ENCODE measurements at regions of chr6 and their contacts with region 1.

Region 1: DNA sequence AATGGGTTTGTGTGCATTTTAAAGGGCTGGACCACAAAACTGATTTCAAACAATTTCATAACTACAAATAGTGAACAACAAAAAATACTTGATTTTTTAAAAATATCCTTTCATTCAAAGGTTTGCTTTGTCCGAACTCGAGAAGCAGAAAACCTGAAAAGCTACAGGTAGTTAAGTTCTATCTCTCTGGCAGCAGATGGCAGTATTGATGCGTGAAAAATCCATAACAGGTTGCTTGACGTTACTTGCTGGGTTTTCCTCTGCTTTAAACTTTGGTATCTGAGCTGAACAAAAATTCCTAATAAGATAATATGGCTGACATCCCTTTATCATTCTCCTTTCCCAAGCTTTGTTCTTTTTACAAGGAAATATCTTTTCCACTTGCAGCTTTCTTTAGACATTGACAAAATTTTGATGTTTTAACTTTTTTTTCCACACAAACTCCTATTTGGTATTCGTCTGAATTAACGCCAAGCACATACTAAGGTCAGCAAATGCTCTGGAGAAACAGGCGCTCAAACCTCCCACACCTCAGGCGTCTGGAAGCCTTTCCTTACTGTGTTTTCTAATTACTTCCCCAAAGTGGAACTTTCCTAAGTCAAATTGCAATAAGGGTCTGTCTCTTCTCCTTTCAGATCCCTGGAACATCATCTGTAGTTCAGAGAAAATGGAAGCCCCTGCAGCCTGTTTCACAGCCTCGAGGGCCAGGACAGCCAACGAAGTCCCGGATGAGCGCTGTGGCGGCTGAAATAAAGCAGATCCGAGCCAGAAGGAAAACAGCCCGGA is 50.3 kb upstream of the GFRAL start:
- DNase-seq: peak in 1 of 10 donors; percentile 10
- H3K4me3 ChIP-seq: no peak overlapping the region
- H3K27ac ChIP-seq: no peak overlapping the region
- H3K27me3 ChIP-seq: no peaks in the 10 kb centered on the region
- CTCF ChIP-seq: peak; percentile 38 to 76 (median 60)

Region 2: DNA sequence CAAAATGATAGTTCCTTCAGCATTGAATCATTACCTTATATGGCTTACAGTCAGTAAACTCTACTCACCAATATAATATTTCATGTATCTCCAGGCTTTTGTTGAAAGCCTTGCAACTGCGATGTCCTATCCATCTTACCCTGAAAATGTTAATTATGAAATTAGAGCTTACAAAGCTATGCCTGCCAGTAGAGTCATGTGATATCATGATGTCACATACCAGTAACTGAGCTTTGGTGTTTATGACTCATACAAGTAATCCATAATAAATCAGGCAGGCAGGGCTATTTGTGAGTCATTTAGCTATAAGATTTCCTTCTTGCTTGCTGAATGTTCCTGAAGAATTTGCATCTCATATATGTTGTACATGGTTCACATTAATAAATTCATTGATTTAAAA is 475.3 kb before region 1 on chr6:
- intact Hi-C with region 1: no loop called
- DNase-seq: no peak
- H3K4me3 ChIP-seq: no peak overlapping the region
- H3K27ac ChIP-seq: no peak overlapping the region
- H3K27me3 ChIP-seq: no peaks in the 10 kb centered on the region
- CTCF ChIP-seq: no peak

Region 3: GRCh38 chr6:55953335-55953734 is 676.4 kb after region 1 on chr6:
- intact Hi-C with region 1: loop called in 1 of 2 experiments (anchors 10 kb)
- DNase-seq: no peak
- H3K4me3 ChIP-seq: peak overlapping the region in 44 of 59 donors; percentile 3 to 57 (median 30)
- H3K27ac ChIP-seq: no peak overlapping the region
- H3K27me3 ChIP-seq: no peaks in the 10 kb centered on the region
- CTCF ChIP-seq: peak in 55 of 56 donors; percentile 16 to 71 (median 44)

Measured in dorsolateral prefrontal cortex (tissue), 120 donors.